Activated naive CD8-positive, alpha-beta T cell treated with anti-CD3 and anti-CD28 coated beads, Interleukin-2, amount 10 ng/mL, durations not matched to agents 7 days and 5 days (primary cell): ENCODE measurements at regions of chr17 and their contacts with region 1.

Region 1: GRCh38 chr17:82716203-82717010 is at the start of gene FN3KRP:
- DNase-seq: peak; percentile 91
- ATAC-seq: peak; percentile 88
- H3K4me3 Mint-ChIP-seq: peak within 1 kb of the TSS; percentile 89
- H3K27ac Mint-ChIP-seq: peak within 1 kb of the TSS; percentile 91
- H3K4me1 Mint-ChIP-seq: peaks cover 15% of the 10 kb centered on the region
- H3K27me3 Mint-ChIP-seq: no peaks in the 10 kb centered on the region
- total RNA-seq, gene FN3KRP: 42.6 to 42.7 TPM

Region 2: DNA sequence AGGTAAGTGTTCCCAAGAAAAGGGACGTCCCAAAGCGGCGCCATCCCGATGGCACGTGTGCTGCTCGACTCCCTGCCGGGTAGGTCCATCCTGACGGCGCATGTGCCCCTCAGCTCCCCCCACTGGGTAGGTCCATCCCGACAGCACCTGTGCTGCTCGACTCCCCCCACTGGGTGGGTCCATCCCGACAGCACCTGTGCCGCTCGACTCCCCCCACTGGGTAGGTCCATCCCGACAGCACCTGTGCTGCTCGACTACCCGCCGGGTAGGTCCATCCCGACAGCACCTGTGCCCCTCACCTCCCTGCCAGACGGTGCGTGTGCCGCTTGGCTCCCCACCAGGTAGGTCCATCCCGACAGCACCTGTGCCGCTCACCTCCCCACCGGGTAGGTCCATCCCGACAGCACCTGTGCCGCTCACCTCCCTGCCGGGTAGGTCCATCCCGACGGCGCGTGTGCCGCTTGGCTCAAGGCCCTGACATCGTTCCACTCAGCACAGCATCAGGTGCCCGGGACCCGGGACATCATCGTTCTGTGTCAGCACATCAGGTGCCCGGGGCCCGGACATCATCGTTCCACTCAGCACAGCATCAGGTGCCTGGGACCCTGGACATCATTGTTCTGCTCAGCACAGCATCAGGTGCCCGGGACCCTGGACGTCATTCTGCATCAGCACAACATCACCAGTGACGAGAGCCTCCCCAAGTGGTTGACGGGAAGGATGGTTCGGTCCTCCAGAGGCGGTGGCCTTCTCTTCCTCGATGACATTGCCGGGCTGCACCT is 13.3 kb after region 1 on chr17:
- POLR2A ChIA-PET with region 1: interaction called, 13 read pairs
- DNase-seq: no peak
- ATAC-seq: no peak
- H3K4me3 Mint-ChIP-seq: no peak overlapping the region
- H3K27ac Mint-ChIP-seq: no peak overlapping the region
- H3K4me1 Mint-ChIP-seq: no peaks in the 10 kb centered on the region
- H3K27me3 Mint-ChIP-seq: no peaks in the 10 kb centered on the region

Region 3: GRCh38 chr17:82740906-82741759 is 24.7 kb after region 1 on chr17:
- POLR2A ChIA-PET with region 1: no interaction called
- DNase-seq: no peak
- ATAC-seq: no peak
- H3K4me3 Mint-ChIP-seq: no peak overlapping the region
- H3K27ac Mint-ChIP-seq: no peak overlapping the region
- H3K4me1 Mint-ChIP-seq: no peaks in the 10 kb centered on the region
- H3K27me3 Mint-ChIP-seq: no peaks in the 10 kb centered on the region